ENCODE measurements at regions of chr13 and their contacts with region 1.

Region 1: GRCh38 chr13:97109841-97110492 is 112.2 kb upstream of the MBNL2 start:
- DNase-seq: peak; percentile 95
- H3K4me3 ChIP-seq: peak overlapping the region; percentile 21 to 47 (median 38)
- H3K27ac ChIP-seq: peak overlapping the region; percentile 80 to 91 (median 86)
- H3K4me1 ChIP-seq: peaks cover 20 to 71% (median 69%) of the 10 kb centered on the region in 4 donors
- H3K27me3 ChIP-seq: no peaks in the 10 kb centered on the region
- CTCF ChIP-seq: peak; percentile 95 to 99 (median 97)
- EP300 ChIP-seq: no peak
- POLR2A ChIP-seq: no peak

Region 2: DNA sequence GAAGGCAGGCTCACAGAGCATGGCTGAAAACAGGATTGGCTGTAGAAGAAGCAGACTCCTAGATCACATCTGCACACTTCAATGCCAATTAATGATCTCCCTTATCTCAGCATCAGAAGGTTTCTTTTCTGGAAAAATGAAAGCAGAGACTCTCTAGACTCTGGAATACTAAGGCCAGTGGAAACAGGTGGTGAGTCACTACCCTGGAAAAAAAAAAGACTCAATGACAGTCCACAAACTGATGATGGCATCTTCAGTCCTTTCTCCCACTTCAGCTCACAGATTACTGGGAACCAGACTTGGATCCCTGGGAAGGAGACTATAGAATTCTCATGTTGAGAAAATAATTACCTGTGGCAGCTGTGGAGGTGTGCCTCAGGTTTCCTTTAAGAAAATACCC is 64.7 kb after region 1 on chr13:
- intact Hi-C with region 1: no loop called
- DNase-seq: no peak
- H3K4me3 ChIP-seq: no peak overlapping the region
- H3K27ac ChIP-seq: no peak overlapping the region
- H3K4me1 ChIP-seq: no peaks in the 10 kb centered on the region
- H3K27me3 ChIP-seq: no peaks in the 10 kb centered on the region
- CTCF ChIP-seq: no peak
- EP300 ChIP-seq: no peak
- POLR2A ChIP-seq: no peak

Region 3: GRCh38 chr13:97221989-97222700 is 112.2 kb after region 1 on chr13 and contains the start of gene MBNL2:
- intact Hi-C with region 1: loop called (anchors 5 kb)
- DNase-seq: peak; percentile 98
- H3K4me3 ChIP-seq: peak within 1 kb of the TSS; percentile 62 to 74 (median 69)
- H3K27ac ChIP-seq: peak within 1 kb of the TSS; percentile 90 to 94 (median 92)
- H3K4me1 ChIP-seq: peaks cover 18 to 34% (median 30%) of the 10 kb centered on the region in 4 donors
- H3K27me3 ChIP-seq: no peaks in the 10 kb centered on the region
- CTCF ChIP-seq: no peak
- EP300 ChIP-seq: peak; percentile 42
- POLR2A ChIP-seq: peak; percentile 67
- total RNA-seq, gene MBNL2: 92.8 to 132 (median 101) TPM

Region 4: DNA sequence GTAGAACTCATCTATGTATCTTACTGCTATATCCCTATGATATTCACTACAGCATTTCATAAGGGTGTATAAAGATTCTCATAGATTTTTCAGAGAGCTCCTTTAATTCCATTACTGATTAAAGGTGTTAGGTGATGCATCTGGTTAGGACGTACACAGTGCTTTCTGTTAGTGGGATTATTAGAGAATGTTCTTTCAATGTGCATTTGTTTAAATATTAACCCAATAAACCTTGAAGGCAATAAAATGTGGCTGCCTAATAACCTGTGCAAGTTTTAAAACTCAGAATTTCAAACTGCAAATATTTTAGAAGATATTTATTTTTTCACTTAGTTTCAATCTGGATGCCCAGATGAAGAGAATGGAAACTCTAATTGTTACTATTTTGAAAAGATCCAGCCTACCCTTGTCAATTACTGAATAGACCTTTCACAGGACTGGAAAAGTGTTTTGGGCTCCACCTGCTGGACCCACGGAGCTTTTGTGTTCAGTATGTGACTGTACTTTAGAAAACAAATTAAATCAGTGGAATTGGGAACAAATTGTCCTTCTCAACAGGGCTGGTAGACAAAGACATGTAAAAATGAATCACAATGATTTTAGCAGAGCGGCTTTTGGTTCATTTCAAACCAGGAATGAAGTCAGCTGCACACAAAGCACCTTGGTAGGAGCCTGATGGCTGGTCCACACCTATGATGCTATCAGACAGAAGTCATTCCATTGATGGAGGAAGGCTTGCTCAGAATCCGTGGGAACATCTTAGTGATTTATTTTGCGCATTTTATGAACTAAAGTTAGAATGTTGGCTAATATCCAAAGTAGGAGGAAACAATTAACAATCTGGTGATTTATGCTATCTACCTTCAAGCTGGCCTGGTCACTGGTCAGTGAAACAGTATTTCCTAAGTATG is 234.6 kb after region 1 on chr13:
- intact Hi-C with region 1: loop called (anchors 2 kb)
- DNase-seq: no peak
- H3K4me3 ChIP-seq: no peak overlapping the region
- H3K27ac ChIP-seq: peak overlapping the region; percentile 18 to 86 (median 58)
- H3K4me1 ChIP-seq: peaks cover 30 to 67% (median 53%) of the 10 kb centered on the region in 4 donors
- H3K27me3 ChIP-seq: no peaks in the 10 kb centered on the region
- CTCF ChIP-seq: peak; percentile 73 to 82 (median 78)
- EP300 ChIP-seq: no peak
- POLR2A ChIP-seq: no peak

Region 5: GRCh38 chr13:97359181-97360057 is 249.5 kb after region 1 on chr13:
- intact Hi-C with region 1: loop called (anchors 2 kb)
- DNase-seq: no peak
- H3K4me3 ChIP-seq: no peak overlapping the region
- H3K27ac ChIP-seq: peak overlapping the region in 3 of 4 donors; percentile 51 to 64 (median 53)
- H3K4me1 ChIP-seq: peaks cover 20 to 57% (median 43%) of the 10 kb centered on the region in 4 donors
- H3K27me3 ChIP-seq: no peaks in the 10 kb centered on the region
- CTCF ChIP-seq: peak; percentile 85 to 91 (median 89)
- EP300 ChIP-seq: no peak
- POLR2A ChIP-seq: no peak

Region 6: GRCh38 chr13:97403893-97404750 is 294.2 kb after region 1 on chr13:
- intact Hi-C with region 1: no loop called
- DNase-seq: no peak
- H3K4me3 ChIP-seq: no peak overlapping the region
- H3K27ac ChIP-seq: no peak overlapping the region
- H3K4me1 ChIP-seq: peaks cover 0 to 16% (median 4%) of the 10 kb centered on the region in 4 donors
- H3K27me3 ChIP-seq: no peaks in the 10 kb centered on the region
- CTCF ChIP-seq: no peak
- EP300 ChIP-seq: no peak
- POLR2A ChIP-seq: no peak